MCF 10A (cell line): ENCODE measurements at regions of chr2 and their contacts with region 1.

Region 1: DNA sequence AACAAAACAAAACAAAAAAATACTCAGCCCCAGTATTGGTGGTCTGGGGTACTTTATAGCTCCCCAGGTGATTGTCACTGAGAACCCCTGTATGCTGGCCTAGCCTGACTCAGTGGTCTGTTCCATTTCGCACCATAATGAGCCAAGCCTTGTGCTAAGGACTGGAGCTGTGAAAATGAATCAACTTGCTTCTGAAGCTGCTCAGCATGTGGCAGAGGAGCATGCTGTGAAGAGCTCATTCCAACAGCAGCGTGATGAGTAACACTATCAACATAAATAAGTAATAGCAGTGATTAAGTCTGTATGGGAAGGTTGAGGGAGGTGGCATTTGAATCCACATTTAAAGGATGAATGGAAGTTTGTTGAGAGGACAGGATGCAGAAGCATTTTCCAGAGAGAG is 67.2 kb upstream of the ATL2 start:
- DNase-seq: peak; percentile 60
- H3K4me3 Mint-ChIP-seq: no peak overlapping the region
- H3K27ac Mint-ChIP-seq: no peak overlapping the region
- H3K4me1 Mint-ChIP-seq: peaks cover 37% of the 10 kb centered on the region
- H3K27me3 Mint-ChIP-seq: no peaks in the 10 kb centered on the region
- CTCF ChIP-seq: no peak

Region 2: GRCh38 chr2:38417745-38418689 is 26.2 kb before region 1 on chr2:
- CTCF ChIA-PET with region 1: interaction called, 6 read pairs
- POLR2A ChIA-PET with region 1: interaction called, 19 read pairs
- intact Hi-C with region 1: no loop called
- DNase-seq: no peak
- H3K4me3 Mint-ChIP-seq: no peak overlapping the region
- H3K27ac Mint-ChIP-seq: peak overlapping the region; percentile 36
- H3K4me1 Mint-ChIP-seq: peaks cover 6% of the 10 kb centered on the region
- H3K27me3 Mint-ChIP-seq: no peaks in the 10 kb centered on the region
- CTCF ChIP-seq: no peak